ENCODE measurements at regions of chr7 and their contacts with region 1.

Region 1: GRCh38 chr7:67033251-67033650 is 36.6 kb downstream of the TYW1 start:
- DNase-seq: no peak
- H3K4me3 Mint-ChIP-seq: no peak overlapping the region
- H3K27ac Mint-ChIP-seq: no peak overlapping the region
- H3K4me1 Mint-ChIP-seq: no peaks in the 10 kb centered on the region
- H3K27me3 Mint-ChIP-seq: no peaks in the 10 kb centered on the region
- CTCF ChIP-seq: no peak

Region 2: DNA sequence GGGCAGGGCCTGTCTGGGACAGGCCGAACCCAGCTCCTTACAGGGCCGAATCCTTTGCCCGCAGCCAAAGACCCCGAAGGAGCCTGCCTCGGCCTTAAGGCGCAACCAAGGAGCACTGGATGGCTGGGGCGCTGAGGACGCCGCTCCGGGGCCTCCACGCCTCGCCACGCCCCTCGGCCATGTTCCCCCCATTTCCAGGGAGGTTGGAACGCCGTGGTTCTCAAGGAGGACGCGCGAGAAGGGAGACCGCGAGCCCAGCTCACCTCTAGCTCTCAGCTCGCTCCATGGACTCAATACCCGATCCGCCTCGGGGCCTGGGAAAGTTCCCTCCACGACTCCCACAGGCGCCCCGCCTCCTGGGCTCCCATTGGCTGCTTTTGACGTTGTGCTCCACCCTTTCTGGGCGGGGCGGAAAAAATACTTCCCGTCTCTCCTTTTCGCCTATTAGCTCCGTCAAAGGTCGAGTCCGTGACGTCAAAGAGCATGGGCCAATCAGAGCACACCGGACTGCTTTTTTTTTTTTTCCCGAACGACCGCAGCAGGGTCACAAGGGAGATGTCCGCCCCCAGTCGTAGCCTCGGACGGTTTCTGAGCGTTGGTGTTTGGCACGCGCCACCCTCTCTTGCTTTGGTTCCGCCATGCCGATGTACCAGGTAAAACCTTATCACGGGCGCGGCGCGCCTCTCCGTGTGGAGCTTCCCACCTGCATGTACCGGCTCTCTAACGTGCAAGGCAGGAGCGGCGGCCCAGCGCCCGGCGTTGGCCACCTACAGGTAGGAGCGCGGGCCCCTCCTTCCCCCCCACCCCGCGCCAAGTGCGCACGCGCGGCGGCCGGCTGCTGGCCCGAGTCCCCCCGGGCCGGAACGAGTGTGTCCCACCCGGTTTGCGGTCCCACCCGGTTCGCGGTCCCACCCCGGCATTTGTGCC is 269.1 kb after region 1 on chr7:
- CTCF ChIA-PET with region 1: interaction called, 19 read pairs
- POLR2A ChIA-PET with region 1: no interaction called
- intact Hi-C with region 1: no loop called
- DNase-seq: peak; percentile 100
- H3K4me3 Mint-ChIP-seq: peak overlapping the region; percentile 88
- H3K27ac Mint-ChIP-seq: peak overlapping the region; percentile 92
- H3K4me1 Mint-ChIP-seq: peaks cover 9% of the 10 kb centered on the region
- H3K27me3 Mint-ChIP-seq: no peaks in the 10 kb centered on the region
- CTCF ChIP-seq: no peak

Measured in MCF 10A (cell line).